ENCODE measurements at regions of chr20 and their contacts with region 1.

Region 1: DNA sequence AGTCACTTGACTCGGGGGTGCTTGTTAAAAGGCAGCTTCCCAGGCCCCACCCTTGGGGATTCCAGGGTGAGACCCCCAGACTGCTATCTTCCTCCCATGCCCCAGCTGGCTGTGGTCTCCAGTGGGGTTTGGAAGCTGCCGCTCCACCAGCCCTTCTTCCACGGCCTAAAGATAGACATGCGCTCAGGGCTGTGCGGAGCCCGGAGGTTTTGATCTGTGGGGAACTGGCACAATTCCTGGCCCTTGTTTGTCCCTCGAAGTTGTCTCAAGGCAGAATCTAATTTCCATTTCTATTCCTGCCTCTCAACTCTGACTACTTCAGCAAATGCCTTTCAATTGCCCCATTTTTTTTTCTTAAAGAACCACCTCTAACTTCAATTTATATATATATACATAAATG is 120.7 kb upstream of the SRSF6 start:
- DNase-seq: no peak
- H3K4me3 ChIP-seq: no peak overlapping the region
- H3K27ac ChIP-seq: no peak overlapping the region
- H3K4me1 ChIP-seq: no peaks in the 10 kb centered on the region
- H3K27me3 ChIP-seq: no peaks in the 10 kb centered on the region
- CTCF ChIP-seq: no peak
- EP300 ChIP-seq: no peak
- POLR2A ChIP-seq: no peak

Region 2: DNA sequence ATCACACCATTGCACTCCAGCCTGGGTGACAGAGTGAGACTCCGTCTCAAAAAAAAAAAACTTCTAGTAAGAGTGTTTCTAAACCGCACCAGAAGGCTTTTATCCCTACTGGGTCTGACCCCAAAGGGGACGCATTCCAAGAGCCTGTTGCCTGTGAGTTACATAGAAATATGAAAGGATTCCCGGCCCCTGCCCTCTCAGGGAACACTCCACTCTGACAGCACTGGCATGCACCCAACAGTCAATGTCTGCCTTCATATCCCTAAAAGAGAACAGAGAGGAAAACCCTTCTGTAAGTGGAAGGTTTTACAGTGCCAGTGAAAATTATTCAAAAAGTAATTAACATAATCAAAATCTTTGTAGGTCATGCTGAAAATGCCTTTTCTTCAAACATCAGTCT is 30.2 kb before region 1 on chr20:
- in situ Hi-C with region 1: no loop called
- intact Hi-C with region 1: loop called (anchors 1 kb)
- DNase-seq: no peak
- H3K4me3 ChIP-seq: no peak overlapping the region
- H3K27ac ChIP-seq: no peak overlapping the region
- H3K4me1 ChIP-seq: no peaks in the 10 kb centered on the region
- H3K27me3 ChIP-seq: no peaks in the 10 kb centered on the region
- CTCF ChIP-seq: no peak
- EP300 ChIP-seq: no peak
- POLR2A ChIP-seq: no peak

Region 3: DNA sequence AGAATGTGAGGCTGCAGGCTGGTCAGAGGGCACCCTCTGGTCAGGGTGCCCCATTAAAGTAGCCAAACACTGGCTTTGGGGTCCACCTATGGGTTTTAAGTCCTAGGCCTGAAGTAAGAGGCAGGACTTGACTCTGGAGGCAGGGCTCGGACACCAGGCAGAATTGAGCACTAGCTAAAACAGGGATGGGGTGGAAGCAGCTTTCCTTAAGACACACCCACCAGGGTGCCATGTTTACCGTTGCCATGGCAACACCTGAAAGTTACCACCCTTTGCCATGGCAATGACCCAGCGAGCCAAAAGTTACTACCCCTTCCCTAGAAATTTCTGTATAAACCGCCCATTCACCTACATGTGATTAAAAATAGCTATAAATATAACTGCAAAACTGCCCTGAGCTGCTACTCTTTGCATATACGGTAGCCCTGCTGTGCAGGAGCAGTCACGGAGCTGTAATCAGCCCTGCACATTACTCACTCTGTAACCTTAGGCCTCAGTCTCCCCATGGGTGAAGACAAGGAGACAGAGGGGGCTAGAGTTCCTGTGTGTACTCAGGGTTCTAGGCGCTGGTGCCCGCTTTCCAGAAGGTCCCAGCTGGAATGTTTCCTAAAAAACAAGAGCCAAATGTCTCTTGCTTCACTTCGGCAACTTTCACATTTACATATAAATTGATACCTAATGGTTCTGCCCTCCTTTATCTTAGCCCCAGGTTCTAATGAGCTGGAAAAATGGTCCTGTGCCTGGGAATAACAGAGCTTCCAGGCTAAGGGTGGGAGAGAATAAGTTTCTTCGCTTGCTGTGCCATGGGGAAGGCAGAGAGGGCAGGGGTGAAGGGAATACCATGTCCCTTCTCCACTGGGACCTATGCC is 93.5 kb after region 1 on chr20:
- in situ Hi-C with region 1: no loop called
- intact Hi-C with region 1: no loop called
- DNase-seq: no peak
- H3K4me3 ChIP-seq: no peak overlapping the region
- H3K27ac ChIP-seq: no peak overlapping the region
- H3K4me1 ChIP-seq: no peaks in the 10 kb centered on the region
- H3K27me3 ChIP-seq: peaks cover 3% of the 10 kb centered on the region
- CTCF ChIP-seq: no peak
- EP300 ChIP-seq: no peak
- POLR2A ChIP-seq: no peak